ENCODE measurements at regions of chr9 and their contacts with region 1.

Region 1: GRCh38 chr9:36765468-36766341 is 193.0 kb downstream of the MELK start:
- DNase-seq: peak; percentile 81 to 96 (median 91)
- ATAC-seq: peak; percentile 100
- H3K4me3 ChIP-seq: peak overlapping the region; percentile 56
- H3K4me3 Mint-ChIP-seq: no peak overlapping the region
- H3K27ac ChIP-seq: peak overlapping the region; percentile 56
- H3K27ac Mint-ChIP-seq: no peak overlapping the region
- H3K4me1 ChIP-seq: no peaks in the 10 kb centered on the region
- H3K4me1 Mint-ChIP-seq: peaks cover 0 to 6% (median 2%) of the 10 kb centered on the region in 7 donors
- H3K27me3 ChIP-seq: no peaks in the 10 kb centered on the region
- H3K27me3 Mint-ChIP-seq: peaks cover 0 to 16% (median 11%) of the 10 kb centered on the region in 5 donors

Region 2: DNA sequence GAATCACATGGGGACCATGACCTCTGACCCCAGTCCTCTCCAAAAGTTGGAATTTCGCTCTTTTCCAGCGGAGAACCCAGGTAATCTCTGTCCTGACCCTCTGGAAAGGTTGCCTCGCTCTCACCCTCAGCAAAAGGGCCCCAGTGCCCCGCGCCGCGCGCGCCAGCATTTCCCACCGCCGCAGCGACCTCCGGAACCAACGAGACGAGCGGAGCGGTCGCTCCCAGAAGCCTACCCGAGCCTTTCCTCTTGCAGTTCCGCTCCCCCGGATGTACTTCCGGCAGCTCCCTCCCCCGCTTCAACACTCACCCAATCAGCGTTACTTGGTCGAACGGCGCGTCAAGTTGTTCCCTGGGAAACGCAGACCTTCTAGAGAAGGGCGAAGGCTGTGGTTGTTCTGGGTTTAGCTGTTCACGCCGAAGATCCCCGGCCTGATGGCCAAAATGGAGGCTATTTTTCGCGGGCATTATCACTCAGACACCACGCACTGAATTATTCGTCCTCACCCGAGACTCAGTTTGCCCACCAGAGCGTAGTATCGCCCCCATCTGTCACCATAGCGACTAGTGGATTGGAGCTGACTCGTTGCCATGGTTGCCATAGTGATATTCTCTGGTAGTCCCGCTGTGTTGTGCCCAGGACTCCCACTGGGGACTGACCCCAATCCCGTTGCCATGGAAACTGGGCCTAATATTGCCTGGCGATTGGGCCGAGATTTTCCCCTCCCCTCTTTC is 1662.6 kb before region 1 on chr9 and contains the start of gene STOML2:
- CTCF ChIA-PET with region 1: no interaction called
- POLR2A ChIA-PET with region 1: no interaction called
- intact Hi-C with region 1: loop called in 1 of 2 experiments (anchors 5 kb)
- DNase-seq: peak; percentile 72 to 95 (median 91)
- ATAC-seq: peak; percentile 98
- H3K4me3 ChIP-seq: peak within 1 kb of the TSS; percentile 92
- H3K4me3 Mint-ChIP-seq: peak within 1 kb of the TSS; percentile 88 to 98 (median 92)
- H3K27ac ChIP-seq: peak within 1 kb of the TSS; percentile 81
- H3K27ac Mint-ChIP-seq: peak within 1 kb of the TSS; percentile 92 to 99 (median 96)
- H3K4me1 ChIP-seq: peaks cover 12 to 18% of the 10 kb centered on the region in 2 donors
- H3K4me1 Mint-ChIP-seq: peaks cover 18 to 36% (median 33%) of the 10 kb centered on the region in 7 donors
- H3K27me3 ChIP-seq: no peaks in the 10 kb centered on the region
- H3K27me3 Mint-ChIP-seq: no peaks in the 10 kb centered on the region
- total RNA-seq, gene STOML2: 34.7 to 126 (median 44.9) TPM

Region 3: DNA sequence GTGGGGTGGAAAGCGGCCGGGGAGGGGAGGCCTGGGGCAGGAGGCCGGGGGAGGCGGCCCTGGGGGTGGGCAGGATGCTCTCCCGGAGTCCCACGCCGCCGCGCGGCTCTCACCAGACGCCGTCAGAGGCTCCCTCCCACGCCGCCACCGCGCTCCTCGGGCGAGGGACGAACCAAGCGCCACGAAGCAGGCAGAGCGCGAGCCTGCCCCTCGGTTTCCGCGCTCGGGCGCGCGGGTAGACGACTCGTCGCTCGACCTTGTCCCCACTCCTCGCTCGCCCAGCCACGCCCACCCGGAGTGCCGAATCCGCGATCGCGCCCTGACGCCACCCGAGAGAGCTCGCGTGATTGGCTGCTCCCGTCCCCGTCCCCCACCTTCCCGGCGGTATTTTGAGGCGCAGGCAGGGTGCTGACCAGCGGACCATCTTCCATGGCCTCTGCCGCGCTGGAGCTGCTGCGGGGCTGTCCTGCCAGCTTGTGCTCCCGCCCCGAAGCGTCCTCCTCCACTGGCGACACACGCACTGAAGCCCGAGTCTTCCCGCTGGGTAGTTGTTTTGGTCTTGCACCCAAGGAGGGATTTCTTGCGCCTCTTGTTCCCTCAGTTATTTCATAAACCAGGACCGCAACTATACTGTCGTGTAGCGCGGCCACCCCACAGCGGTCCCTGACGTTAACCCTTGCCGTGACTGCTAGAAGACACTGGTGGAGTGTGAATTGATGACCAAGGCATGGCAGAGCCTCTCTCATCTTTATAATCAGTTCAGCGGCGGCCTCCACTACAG is 507.3 kb before region 1 on chr9 and contains the start of gene GNE:
- CTCF ChIA-PET with region 1: no interaction called
- POLR2A ChIA-PET with region 1: no interaction called
- intact Hi-C with region 1: loop called in 1 of 2 experiments (anchors 1 kb)
- DNase-seq: peak; percentile 92 to 99 (median 96)
- ATAC-seq: peak; percentile 96
- H3K4me3 ChIP-seq: peak within 1 kb of the TSS; percentile 98
- H3K4me3 Mint-ChIP-seq: peak within 1 kb of the TSS; percentile 96 to 100 (median 98)
- H3K27ac ChIP-seq: peak within 1 kb of the TSS; percentile 93
- H3K27ac Mint-ChIP-seq: peak within 1 kb of the TSS; percentile 92 to 98 (median 96)
- H3K4me1 ChIP-seq: peaks cover 7 to 9% of the 10 kb centered on the region in 2 donors
- H3K4me1 Mint-ChIP-seq: peaks cover 0 to 14% (median 12%) of the 10 kb centered on the region in 7 donors
- H3K27me3 ChIP-seq: no peaks in the 10 kb centered on the region
- H3K27me3 Mint-ChIP-seq: peaks cover 0 to 2% (median 0%) of the 10 kb centered on the region in 5 donors
- total RNA-seq, gene GNE: 12.6 to 18.5 (median 16.0) TPM

Region 4: GRCh38 chr9:36572515-36573418 is 192.9 kb before region 1 on chr9 and contains the start of gene MELK:
- CTCF ChIA-PET with region 1: no interaction called
- POLR2A ChIA-PET with region 1: no interaction called
- intact Hi-C with region 1: loop called in 1 of 2 experiments (anchors 2 kb)
- DNase-seq: peak; percentile 69 to 94 (median 82)
- ATAC-seq: peak; percentile 97
- H3K4me3 ChIP-seq: peak within 1 kb of the TSS; percentile 83
- H3K4me3 Mint-ChIP-seq: peak within 1 kb of the TSS; percentile 88 to 95 (median 90)
- H3K27ac ChIP-seq: peak within 1 kb of the TSS; percentile 76
- H3K27ac Mint-ChIP-seq: peak within 1 kb of the TSS; percentile 62 to 90 (median 83)
- H3K4me1 ChIP-seq: peaks cover 0 to 5% of the 10 kb centered on the region in 2 donors
- H3K4me1 Mint-ChIP-seq: peaks cover 7 to 38% (median 13%) of the 10 kb centered on the region in 7 donors
- H3K27me3 ChIP-seq: no peaks in the 10 kb centered on the region
- H3K27me3 Mint-ChIP-seq: peaks cover 0 to 5% (median 0%) of the 10 kb centered on the region in 5 donors
- total RNA-seq, gene MELK: 0.22 to 40.2 (median 0.88) TPM in 3 of 5 experiments, not detected in the others

Region 5: DNA sequence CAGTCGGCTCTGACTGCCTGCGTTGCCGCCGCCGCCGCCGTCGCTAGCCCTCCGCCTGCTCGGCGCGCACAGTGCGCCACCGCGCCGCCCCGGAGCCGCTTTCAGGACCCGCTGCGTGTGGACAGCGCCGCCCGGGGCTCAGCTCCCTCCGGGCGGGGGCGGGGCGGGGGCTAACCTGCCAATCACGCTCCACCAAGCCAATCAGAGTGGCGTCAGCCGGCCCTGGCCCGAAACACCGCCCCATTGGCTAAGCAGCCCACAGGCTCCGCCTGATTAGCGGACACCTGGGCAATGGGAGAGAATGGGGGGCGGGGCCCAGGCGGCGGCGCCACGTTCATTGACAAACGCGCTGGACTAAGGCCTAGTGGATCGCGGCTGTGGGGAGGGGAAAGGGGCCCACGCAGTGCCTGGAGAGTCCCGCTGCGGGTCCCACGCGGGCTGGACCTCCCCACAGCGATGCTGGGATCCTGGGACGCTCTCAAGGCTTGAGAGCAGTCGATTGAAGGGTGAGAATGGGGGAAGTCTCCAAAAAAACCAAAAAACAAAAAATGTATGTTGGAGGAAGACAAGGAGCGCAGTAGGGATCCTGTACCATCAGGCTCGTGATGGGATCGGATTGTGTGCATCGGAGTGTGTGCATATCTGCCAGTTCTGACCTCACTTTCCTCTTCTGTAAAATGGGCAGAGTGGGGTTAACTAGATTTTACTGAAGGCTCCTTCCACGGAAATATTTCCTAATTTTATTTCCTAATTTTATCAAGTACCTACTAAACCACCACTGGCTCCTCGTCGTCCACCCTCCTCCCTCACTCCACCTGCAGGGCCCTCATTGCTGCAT is 262.1 kb after region 1 on chr9:
- CTCF ChIA-PET with region 1: no interaction called
- POLR2A ChIA-PET with region 1: no interaction called
- intact Hi-C with region 1: loop called in 1 of 2 experiments (anchors 1 kb)
- DNase-seq: peak; percentile 67 to 87 (median 77)
- ATAC-seq: peak; percentile 96
- H3K4me3 ChIP-seq: peak overlapping the region; percentile 29
- H3K4me3 Mint-ChIP-seq: peak overlapping the region; percentile 38 to 77 (median 62)
- H3K27ac ChIP-seq: no peak overlapping the region
- H3K27ac Mint-ChIP-seq: peak overlapping the region in 1 of 9 donors; percentile 42
- H3K4me1 ChIP-seq: peaks cover 25 to 56% of the 10 kb centered on the region in 2 donors
- H3K4me1 Mint-ChIP-seq: peaks cover 18 to 50% (median 37%) of the 10 kb centered on the region in 7 donors
- H3K27me3 ChIP-seq: peaks cover 34 to 56% of the 10 kb centered on the region in 2 donors
- H3K27me3 Mint-ChIP-seq: peaks cover 73 to 95% (median 81%) of the 10 kb centered on the region in 5 donors

Region 6: GRCh38 chr9:37422289-37423104 is 656.8 kb after region 1 on chr9 and contains the start of gene GRHPR:
- CTCF ChIA-PET with region 1: no interaction called
- POLR2A ChIA-PET with region 1: no interaction called
- intact Hi-C with region 1: loop called in 1 of 2 experiments (anchors 1 kb)
- DNase-seq: peak; percentile 76 to 93 (median 84)
- ATAC-seq: peak; percentile 99
- H3K4me3 ChIP-seq: peak within 1 kb of the TSS; percentile 86
- H3K4me3 Mint-ChIP-seq: peak within 1 kb of the TSS; percentile 84 to 98 (median 96)
- H3K27ac ChIP-seq: peak within 1 kb of the TSS; percentile 89
- H3K27ac Mint-ChIP-seq: peak within 1 kb of the TSS; percentile 87 to 98 (median 95)
- H3K4me1 ChIP-seq: peaks cover 5 to 12% of the 10 kb centered on the region in 2 donors
- H3K4me1 Mint-ChIP-seq: peaks cover 19 to 31% (median 23%) of the 10 kb centered on the region in 7 donors
- H3K27me3 ChIP-seq: no peaks in the 10 kb centered on the region
- H3K27me3 Mint-ChIP-seq: no peaks in the 10 kb centered on the region
- total RNA-seq, gene GRHPR: 33.2 to 58.6 (median 53.1) TPM

Region 7: DNA sequence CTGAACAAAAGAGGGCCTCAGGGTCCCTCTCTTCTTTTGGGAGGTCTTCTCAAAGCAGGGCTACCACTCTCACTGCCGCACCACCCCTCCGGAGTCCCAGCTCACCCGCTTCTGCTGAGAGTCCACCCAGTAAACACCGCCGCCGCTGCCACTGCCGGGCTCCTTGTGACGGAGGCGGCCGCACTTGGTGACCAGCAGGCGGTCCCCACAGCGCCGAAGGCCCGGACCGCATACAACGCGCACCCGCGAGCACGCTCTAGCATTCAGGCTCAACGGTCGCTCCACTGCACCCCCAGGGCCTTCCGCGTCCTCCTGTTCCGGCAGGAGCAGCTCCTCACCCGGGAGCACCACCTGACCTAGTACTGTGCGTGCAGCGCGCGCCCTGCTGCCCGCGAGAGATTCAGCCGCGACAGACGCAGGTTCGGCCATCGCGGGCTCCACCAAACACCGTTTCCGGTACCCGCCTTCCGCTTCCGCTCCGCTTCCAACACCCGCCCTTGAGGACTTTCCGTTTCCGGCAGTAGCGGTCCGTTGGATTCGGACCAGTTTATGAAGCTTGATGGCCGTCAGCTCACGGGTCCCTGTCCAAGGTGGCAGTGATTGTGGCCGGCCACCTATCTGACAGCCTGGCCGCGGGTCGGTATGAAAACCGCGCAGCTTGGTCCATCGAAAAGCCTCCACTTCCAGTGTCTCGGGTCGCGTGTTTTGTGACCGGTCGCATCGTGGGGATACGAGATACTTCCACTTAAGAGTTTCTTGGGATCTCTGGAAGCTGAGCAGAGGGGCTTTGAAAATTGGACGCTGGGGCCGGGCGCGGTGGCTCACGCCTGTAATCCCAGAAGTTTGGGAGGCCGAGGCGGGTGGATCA is 1019.1 kb after region 1 on chr9 and contains the start of gene EXOSC3:
- CTCF ChIA-PET with region 1: no interaction called
- POLR2A ChIA-PET with region 1: no interaction called
- intact Hi-C with region 1: loop called in 1 of 2 experiments (anchors 2 kb)
- DNase-seq: peak; percentile 66 to 85 (median 81)
- ATAC-seq: peak; percentile 92
- H3K4me3 ChIP-seq: peak within 1 kb of the TSS; percentile 92
- H3K4me3 Mint-ChIP-seq: peak within 1 kb of the TSS; percentile 96 to 98 (median 97)
- H3K27ac ChIP-seq: peak within 1 kb of the TSS; percentile 85
- H3K27ac Mint-ChIP-seq: peak within 1 kb of the TSS; percentile 95 to 98 (median 96)
- H3K4me1 ChIP-seq: peaks cover 18 to 21% of the 10 kb centered on the region in 2 donors
- H3K4me1 Mint-ChIP-seq: peaks cover 18 to 50% (median 40%) of the 10 kb centered on the region in 7 donors
- H3K27me3 ChIP-seq: no peaks in the 10 kb centered on the region
- H3K27me3 Mint-ChIP-seq: peaks cover 0 to 4% (median 0%) of the 10 kb centered on the region in 5 donors
- total RNA-seq, gene EXOSC3: 27.8 to 66.1 (median 60.7) TPM